Colonic mucosa (tissue), 4 donors: ENCODE measurements at regions of chr13 and their contacts with region 1.

Region 1: GRCh38 chr13:99269627-99270241 is 11.6 kb upstream of the GPR18 start:
- DNase-seq: no peak
- H3K4me3 ChIP-seq: no peak overlapping the region
- H3K27ac ChIP-seq: no peak overlapping the region
- H3K4me1 ChIP-seq: no peaks in the 10 kb centered on the region
- H3K27me3 ChIP-seq: no peaks in the 10 kb centered on the region
- CTCF ChIP-seq: peak; percentile 54

Region 2: DNA sequence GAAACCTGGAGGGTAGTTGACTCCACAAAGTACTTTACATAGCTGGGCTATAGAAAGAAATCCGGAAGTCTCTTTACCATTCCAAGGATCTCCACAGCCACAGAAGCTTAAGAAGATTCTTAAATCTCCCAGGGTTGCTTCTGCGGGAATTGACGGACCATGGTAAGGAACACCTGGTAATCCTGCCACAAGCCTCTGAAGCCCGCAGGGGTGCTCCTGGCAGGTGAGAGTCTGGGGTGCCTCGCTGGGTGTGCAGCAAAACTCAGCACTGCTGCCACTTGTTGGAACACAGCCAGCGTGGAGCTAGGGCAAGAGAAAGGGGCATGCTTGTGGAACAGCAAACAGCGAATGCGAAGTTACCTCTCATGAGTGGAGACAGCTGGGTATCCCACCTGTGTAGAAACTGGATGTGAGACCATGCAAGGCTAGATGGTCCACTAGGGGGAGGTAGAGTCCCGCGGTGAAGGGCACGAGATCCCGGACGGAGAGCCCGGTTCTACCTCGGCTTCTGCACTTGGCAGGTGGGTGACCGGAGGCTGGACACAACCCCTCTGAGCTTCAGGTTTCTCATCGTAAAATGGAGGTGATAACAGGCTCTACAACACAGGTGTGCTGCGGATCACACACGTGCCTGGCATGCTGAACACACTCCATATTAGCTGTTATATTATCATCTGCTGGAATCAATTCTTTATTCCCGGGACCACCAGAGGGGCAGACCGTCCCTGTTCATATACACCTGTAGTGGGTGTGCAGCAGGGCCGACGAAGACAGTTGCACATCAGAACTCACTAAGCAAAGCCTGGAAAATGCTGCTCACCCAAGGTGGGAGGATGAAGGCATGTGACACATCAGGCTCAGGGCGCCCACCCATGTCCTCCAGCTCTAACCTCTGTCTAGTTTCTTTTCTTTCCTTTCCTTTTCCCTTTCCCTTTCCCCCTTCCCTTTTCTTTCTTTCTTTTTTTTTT is 93.1 kb before region 1 on chr13:
- intact Hi-C with region 1: loop called (anchors 1 kb)
- DNase-seq: peak; percentile 84
- H3K4me3 ChIP-seq: no peak overlapping the region
- H3K27ac ChIP-seq: no peak overlapping the region
- H3K4me1 ChIP-seq: no peaks in the 10 kb centered on the region
- H3K27me3 ChIP-seq: no peaks in the 10 kb centered on the region
- CTCF ChIP-seq: peak; percentile 86